ENCODE measurements at regions of chr3 and their contacts with region 1.

Region 1: DNA sequence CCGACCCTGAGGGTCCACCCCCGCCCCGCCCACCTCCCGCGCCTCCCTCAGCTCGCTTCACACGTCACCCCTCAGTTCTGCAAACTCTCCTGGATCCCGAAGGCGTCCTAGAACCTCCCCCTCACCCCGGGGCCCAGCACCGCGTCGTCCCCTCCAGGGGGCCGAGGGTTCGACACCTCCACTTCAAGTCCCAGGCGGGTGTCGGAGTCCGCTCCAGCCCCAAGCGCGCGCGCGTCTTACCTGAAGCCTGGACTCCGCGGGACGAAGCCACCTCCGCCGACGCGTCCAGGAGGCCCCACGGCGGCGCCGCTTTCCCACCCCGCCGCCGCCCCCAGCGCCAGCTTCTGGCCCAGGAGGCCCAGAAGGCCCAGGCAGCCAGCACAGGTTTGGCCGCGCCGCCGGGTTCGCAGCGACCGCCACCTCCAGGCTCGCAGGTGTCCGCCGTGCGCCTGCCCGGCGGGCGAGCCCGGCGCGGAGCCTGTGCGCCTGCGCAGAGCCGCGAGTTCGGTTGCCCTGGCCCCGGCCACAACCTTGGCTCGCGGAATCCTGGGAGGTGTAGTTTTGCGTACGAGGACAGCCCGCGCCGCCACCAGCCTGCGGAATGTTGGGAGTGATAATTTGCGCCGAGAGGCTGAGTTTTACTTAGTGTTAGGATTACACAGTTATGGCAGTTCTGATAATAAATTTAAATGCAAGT is at the start of gene POMGNT2:
- DNase-seq: peak; percentile 89
- H3K4me3 ChIP-seq: peak within 1 kb of the TSS; percentile 62 to 74
- H3K27ac ChIP-seq: peak within 1 kb of the TSS; percentile 57 to 58
- H3K4me1 ChIP-seq: no peaks in the 10 kb centered on the region
- H3K27me3 ChIP-seq: no peaks in the 10 kb centered on the region
- CTCF ChIP-seq: peak in 2 of 4 experiments; percentile 24 to 27
- POLR2A ChIP-seq: peak; percentile 44
- total RNA-seq, gene POMGNT2: 20.7 to 46.5 TPM

Region 2: DNA sequence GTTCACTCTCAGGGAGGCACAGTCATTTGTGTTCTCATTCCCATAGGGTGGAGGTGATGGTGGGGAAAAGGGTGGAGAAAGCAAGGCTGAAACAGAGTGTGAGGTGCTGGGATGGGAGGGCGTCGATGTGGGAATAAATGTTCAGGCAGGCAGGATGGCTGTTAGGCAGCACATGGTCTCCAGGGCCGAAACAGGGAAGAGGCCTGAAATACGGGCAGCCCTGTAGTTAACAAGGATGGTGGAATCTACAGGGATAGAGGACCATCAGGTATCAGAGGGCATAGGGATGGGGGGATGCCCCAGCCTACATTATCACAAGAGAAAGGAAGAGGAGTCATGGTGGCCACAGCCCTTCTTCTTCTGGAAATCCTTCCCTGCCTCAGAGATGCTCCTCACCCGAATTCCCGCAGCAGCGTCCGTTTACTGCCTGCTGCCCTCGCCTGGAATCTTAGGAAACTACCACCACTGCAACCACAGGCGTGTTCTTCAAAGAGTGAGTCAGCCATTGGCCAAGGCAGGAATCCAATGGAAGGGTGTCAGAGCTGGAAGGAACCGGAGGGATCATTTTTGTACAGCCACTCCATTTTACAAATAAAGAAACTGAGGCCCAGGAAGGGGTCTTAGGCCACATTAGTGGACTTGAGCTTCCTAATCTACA is 49.8 kb after region 1 on chr3:
- intact Hi-C with region 1: loop called (anchors 2 kb)
- DNase-seq: peak; percentile 22
- H3K4me3 ChIP-seq: no peak overlapping the region
- H3K27ac ChIP-seq: no peak overlapping the region
- H3K4me1 ChIP-seq: peaks cover 4% of the 10 kb centered on the region
- H3K27me3 ChIP-seq: no peaks in the 10 kb centered on the region
- CTCF ChIP-seq: peak in 3 of 4 experiments; percentile 18 to 46 (median 45)
- POLR2A ChIP-seq: no peak

Measured in prostate gland (tissue), 2 donors.